ENCODE measurements at regions of chr1 and their contacts with region 1.

Region 1: DNA sequence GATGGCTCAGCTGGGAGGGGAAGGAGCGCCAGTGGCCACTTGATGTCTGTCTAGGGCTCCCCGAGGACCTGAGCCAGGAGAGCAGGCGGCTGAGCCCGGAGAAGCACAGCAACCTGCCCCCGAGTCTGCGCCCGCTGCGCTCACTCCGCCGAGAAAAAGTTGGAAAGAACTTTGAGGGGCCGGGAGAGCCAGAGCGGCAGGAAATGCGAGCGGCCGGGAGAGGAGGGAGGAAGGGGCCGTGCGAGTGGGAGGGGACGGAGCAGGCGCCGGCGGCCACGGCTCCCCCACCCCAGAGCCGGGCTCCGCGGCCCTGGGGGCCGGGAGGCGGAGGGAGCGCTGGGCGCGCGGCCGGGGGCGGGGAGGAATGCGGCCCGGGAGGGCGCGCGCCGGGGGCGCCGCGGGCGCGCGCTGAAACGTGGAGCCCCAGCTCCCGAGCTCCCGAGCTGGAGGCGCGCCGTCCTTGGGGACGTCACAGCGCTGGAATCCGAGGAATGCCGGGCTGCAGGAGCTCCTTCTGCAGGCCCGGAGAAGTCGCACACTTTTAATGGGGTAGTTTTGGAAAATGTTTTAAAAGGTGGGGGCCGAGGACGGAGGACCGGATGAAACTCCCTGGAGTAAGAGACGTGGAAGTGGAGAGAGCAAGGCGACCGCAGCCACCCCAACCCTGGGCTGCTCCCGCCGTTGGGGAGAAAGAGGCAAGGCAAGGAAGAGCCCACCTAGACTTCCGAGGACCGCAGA is at the start of gene PTPN14:
- DNase-seq: peak; percentile 96
- ATAC-seq: peak; percentile 88
- H3K4me3 ChIP-seq: peak within 1 kb of the TSS; percentile 76
- H3K27ac ChIP-seq: peak within 1 kb of the TSS; percentile 97
- H3K4me1 ChIP-seq: peaks cover 6% of the 10 kb centered on the region
- H3K27me3 ChIP-seq: no peaks in the 10 kb centered on the region
- CTCF ChIP-seq: peak; percentile 59
- POLR2A ChIP-seq: peak; percentile 81
- RAD21 ChIP-seq: peak; percentile 37; the same call in 1 of the 2 replicates
- total RNA-seq, gene PTPN14: 31.7 and 42.8 TPM in 2 replicates

Region 2: DNA sequence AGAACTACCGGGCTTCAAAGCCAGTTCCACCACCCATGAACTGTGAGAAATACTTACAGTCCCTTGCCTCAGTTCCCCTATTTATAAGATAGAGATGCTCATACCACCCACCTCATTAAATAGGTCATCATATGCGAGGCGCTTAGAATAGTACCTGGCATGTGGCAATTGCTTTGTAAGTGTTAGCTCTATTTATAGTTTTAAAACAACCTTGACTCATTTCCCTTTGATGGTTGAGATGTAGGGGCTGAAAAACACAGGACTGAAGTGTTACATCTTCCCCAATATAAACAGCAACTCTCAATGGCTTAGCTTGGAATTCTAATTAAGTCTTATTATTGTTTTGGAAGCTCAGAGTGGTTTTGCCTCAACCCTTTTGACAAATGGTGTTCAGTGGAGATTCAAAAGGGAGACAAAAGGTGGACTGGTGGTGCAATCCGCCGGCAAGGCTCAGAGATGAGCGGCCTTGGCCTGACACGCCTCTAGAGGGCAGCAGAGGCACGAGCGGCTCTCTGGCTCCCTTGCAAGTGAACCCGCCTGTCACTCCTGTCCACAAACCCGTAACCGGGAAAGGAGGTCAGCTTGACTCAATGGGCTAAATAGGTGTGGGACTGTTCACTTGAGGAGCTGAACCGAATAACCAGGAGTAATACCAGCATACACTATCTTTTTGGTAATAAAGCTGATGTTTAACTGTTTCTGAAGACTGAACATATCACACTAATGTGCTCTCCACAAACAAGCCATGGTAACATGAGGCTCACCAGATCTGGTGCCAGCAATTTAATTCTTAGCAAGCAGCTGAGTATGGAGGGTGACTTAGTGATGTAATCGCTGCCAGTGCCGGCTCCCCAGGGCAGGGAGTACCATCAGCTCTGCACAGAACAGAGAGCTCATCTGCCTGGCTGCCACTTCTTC is 290.1 kb before region 1 on chr1:
- CTCF ChIA-PET with region 1: interaction called, 3 read pairs
- POLR2A ChIA-PET with region 1: interaction called, 15 read pairs
- dilution Hi-C with region 1: no loop called
- in situ Hi-C with region 1: no loop called
- intact Hi-C with region 1: no loop called
- DNase-seq: peak; percentile 69
- ATAC-seq: peak; percentile 99
- H3K4me3 ChIP-seq: no peak overlapping the region
- H3K27ac ChIP-seq: no peak overlapping the region
- H3K4me1 ChIP-seq: peaks cover 4% of the 10 kb centered on the region; the same call in 1 of the 2 replicates
- H3K27me3 ChIP-seq: peaks cover 13% of the 10 kb centered on the region
- CTCF ChIP-seq: peak; percentile 91
- POLR2A ChIP-seq: no peak
- RAD21 ChIP-seq: peak; percentile 91

Region 3: DNA sequence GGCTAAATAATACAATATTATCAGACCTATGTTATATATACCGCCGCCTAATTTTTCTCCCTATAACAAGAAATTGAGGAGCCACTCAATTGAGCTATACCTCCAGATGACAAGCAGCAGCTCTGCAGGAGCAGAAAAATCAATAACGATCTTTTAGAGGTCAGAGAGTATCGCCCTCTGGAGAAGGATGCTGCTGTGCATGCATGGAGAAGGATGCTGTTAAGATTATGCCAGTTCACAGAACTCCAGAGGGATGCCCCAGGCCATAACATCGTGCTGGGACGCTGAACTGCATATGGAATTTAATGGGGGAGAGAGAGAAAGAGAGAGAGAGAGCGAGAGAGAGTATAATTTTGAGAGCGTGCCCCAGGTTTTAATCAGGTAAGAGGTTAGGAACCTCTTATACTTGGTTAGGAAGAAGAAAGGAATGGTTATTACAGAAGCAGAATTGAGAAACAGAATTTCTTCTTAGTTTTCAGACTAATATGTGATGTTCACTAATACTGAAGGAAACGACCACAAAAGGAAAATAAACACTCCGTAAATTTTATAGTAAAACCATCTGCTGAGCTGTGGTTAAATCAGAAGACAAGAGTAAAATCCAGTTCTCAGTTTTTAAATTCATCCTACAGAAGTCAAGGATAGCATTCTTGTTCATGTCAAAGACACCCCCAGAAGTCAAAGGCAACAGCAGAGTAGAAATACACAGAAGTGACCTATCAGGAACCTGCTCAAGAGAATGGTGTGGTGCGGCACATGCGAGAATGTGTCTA is 159.5 kb before region 1 on chr1:
- CTCF ChIA-PET with region 1: no interaction called
- POLR2A ChIA-PET with region 1: no interaction called
- dilution Hi-C with region 1: no loop called
- in situ Hi-C with region 1: no loop called
- intact Hi-C with region 1: loop called (anchors 5 kb)
- DNase-seq: peak; percentile 84
- ATAC-seq: peak; percentile 28
- H3K4me3 ChIP-seq: no peak overlapping the region
- H3K27ac ChIP-seq: peak overlapping the region; percentile 39; the same call in 1 of the 2 replicates
- H3K4me1 ChIP-seq: peaks cover 22% of the 10 kb centered on the region
- H3K27me3 ChIP-seq: no peaks in the 10 kb centered on the region
- CTCF ChIP-seq: no peak
- POLR2A ChIP-seq: no peak
- RAD21 ChIP-seq: no peak

Region 4: DNA sequence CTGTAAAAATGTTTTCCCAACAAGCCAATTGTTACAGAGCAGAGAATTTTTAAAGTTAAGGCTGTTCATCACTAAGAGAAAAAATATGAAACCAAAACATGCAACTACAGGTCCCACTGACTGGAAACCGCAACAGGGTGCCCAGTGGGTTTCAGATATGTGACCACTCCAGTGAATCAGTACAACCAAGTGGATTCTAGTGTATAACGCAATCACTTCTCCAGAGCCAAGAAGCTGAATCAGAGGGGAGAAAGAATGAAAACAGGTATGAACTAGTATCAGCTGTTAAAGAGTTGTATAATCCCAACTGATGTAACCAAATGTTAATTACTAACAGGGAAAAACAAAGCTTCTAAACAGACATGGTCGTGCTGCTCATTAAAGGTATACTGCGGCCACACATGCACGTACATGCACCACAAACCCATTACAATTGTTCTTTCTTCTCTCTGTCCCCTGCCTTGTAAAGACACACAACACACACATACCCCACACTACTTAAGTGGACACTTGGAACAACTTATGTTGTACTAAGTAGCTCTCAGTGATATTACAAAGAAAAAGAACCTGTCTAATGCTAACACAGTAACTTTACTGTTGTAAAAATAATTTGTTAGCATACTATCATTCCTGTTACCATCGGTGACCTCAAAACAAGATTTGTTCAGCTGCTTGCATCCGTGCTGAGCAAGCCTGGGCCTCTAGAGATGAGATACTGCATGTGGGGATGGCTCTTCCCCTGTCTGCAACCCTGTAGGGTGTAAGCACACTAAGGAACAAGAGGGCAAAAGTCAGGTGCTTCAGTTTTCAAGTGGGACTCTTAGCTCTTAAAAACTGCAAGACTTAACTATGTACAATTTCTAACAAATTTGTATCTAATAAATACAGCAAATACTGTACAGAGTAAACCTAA is 74.4 kb before region 1 on chr1:
- CTCF ChIA-PET with region 1: no interaction called
- POLR2A ChIA-PET with region 1: interaction called, 3 read pairs
- dilution Hi-C with region 1: no loop called
- in situ Hi-C with region 1: no loop called
- intact Hi-C with region 1: loop called (anchors 2 kb)
- DNase-seq: peak; percentile 95
- ATAC-seq: peak; percentile 79
- H3K4me3 ChIP-seq: no peak overlapping the region
- H3K27ac ChIP-seq: peak overlapping the region; percentile 48; the same call in 1 of the 2 replicates
- H3K4me1 ChIP-seq: peaks cover 19% of the 10 kb centered on the region
- H3K27me3 ChIP-seq: no peaks in the 10 kb centered on the region
- CTCF ChIP-seq: no peak
- POLR2A ChIP-seq: no peak
- RAD21 ChIP-seq: no peak; the same call in 1 of the 2 replicates

Region 5: GRCh38 chr1:214632091-214632490 is 80.5 kb after region 1 on chr1:
- CTCF ChIA-PET with region 1: no interaction called
- POLR2A ChIA-PET with region 1: no interaction called
- dilution Hi-C with region 1: no loop called
- in situ Hi-C with region 1: no loop called
- intact Hi-C with region 1: loop called (anchors 5 kb)
- DNase-seq: no peak
- ATAC-seq: no peak
- H3K4me3 ChIP-seq: no peak overlapping the region
- H3K27ac ChIP-seq: no peak overlapping the region
- H3K4me1 ChIP-seq: no peaks in the 10 kb centered on the region
- H3K27me3 ChIP-seq: no peaks in the 10 kb centered on the region
- CTCF ChIP-seq: no peak
- POLR2A ChIP-seq: no peak
- RAD21 ChIP-seq: no peak